ENCODE measurements at regions of chr11 and their contacts with region 1.

Region 1: GRCh38 chr11:88016392-88017170 is 158.7 kb downstream of the RAB38 start:
- DNase-seq: peak; percentile 78
- ATAC-seq: peak; percentile 80
- H3K4me3 Mint-ChIP-seq: no peak overlapping the region
- H3K27ac Mint-ChIP-seq: no peak overlapping the region
- H3K4me1 Mint-ChIP-seq: no peaks in the 10 kb centered on the region
- H3K27me3 Mint-ChIP-seq: peaks cover 4% of the 10 kb centered on the region

Region 2: DNA sequence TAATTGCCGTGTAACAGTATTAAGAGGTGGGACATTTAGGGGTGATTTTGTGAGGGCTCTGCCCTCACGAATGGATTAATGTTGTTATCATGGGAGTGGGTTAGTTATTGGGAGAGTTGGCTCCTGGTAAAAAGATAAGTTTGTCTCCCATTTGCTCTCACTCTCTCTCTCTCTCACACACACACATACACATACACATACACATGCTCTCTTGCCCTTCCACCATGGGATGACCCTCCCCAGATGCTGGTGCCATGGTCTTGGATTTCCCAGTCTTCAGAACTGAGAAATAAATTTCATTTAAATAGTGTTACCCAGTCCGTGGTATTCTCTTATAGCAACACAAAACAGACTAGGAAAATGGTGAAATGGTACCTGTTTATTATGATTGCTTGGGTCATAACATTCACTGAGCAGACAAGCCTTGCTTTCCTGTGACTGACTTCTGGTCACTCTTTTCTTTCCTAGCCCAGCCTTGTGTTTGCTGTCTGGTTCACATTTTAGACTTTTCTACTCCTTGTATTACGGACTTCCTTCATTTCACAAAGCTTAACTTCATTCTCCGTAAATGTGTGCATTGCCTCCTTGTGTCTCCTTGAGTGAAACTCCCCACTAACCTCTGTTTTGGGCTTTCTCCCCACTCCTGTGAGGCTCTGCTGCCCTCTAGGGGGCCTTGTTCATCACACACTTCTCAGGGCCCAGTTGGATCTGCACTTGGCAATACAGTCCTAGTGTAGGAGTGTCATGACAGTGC is 527.5 kb after region 1 on chr11:
- CTCF ChIA-PET with region 1: interaction called, 42 read pairs
- DNase-seq: peak; percentile 87
- ATAC-seq: peak; percentile 100
- H3K4me3 Mint-ChIP-seq: no peak overlapping the region
- H3K27ac Mint-ChIP-seq: peak overlapping the region; percentile 49
- H3K4me1 Mint-ChIP-seq: peaks cover 6% of the 10 kb centered on the region
- H3K27me3 Mint-ChIP-seq: peaks cover 13% of the 10 kb centered on the region

Region 3: GRCh38 chr11:88552377-88553062 is 535.9 kb after region 1 on chr11:
- CTCF ChIA-PET with region 1: interaction called, 41 read pairs
- DNase-seq: peak; percentile 74
- ATAC-seq: peak; percentile 83
- H3K4me3 Mint-ChIP-seq: no peak overlapping the region
- H3K27ac Mint-ChIP-seq: no peak overlapping the region
- H3K4me1 Mint-ChIP-seq: no peaks in the 10 kb centered on the region
- H3K27me3 Mint-ChIP-seq: peaks cover 20% of the 10 kb centered on the region

Measured in activated CD8-positive, alpha-beta memory T cell treated with anti-CD3 and anti-CD28 coated beads, Interleukin-2, amount 10 ng/mL, durations not matched to agents 7 days and 5 days (primary cell).